ENCODE measurements at regions of chr19 and their contacts with region 1.

Region 1: GRCh38 chr19:55146078-55146704 is 2.8 kb downstream of the TNNT1 start:
- DNase-seq: peak; percentile 64
- ATAC-seq: peak; percentile 76
- H3K4me3 ChIP-seq: peak overlapping the region; percentile 60 to 69
- H3K27ac ChIP-seq: peak overlapping the region; percentile 99
- H3K4me1 ChIP-seq: peaks cover 14 to 60% of the 10 kb centered on the region in 2 experiments
- H3K27me3 ChIP-seq: no peaks in the 10 kb centered on the region
- CTCF ChIP-seq: peak; percentile 78 to 86 (median 80)
- POLR2A ChIP-seq: no peak
- RAD21 ChIP-seq: no peak; the same call in 1 of the 2 replicates

Region 2: GRCh38 chr19:55088543-55089341 is 57.4 kb before region 1 on chr19:
- CTCF ChIA-PET with region 1: no interaction called
- POLR2A ChIA-PET with region 1: no interaction called
- RAD21 ChIA-PET with region 1: no interaction called
- intact Hi-C with region 1: no loop called
- DNase-seq: no peak
- ATAC-seq: peak; percentile 74
- H3K4me3 ChIP-seq: no peak overlapping the region
- H3K27ac ChIP-seq: peak overlapping the region; percentile 28; the same call in 1 of the 2 replicates
- H3K4me1 ChIP-seq: peaks cover 0 to 3% of the 10 kb centered on the region in 2 experiments; a peak in 1 of 4 replicates
- H3K27me3 ChIP-seq: no peaks in the 10 kb centered on the region
- CTCF ChIP-seq: peak in 2 of 3 experiments; percentile 54 to 70; a peak in 4 of 6 replicates
- POLR2A ChIP-seq: no peak
- RAD21 ChIP-seq: no peak

Region 3: GRCh38 chr19:55117636-55118391 is 28.4 kb before region 1 on chr19 and contains the start of gene PPP1R12C:
- CTCF ChIA-PET with region 1: interaction called, 9 read pairs
- POLR2A ChIA-PET with region 1: interaction called, 10 read pairs
- RAD21 ChIA-PET with region 1: no interaction called
- intact Hi-C with region 1: no loop called
- DNase-seq: peak; percentile 96
- ATAC-seq: peak; percentile 92
- H3K4me3 ChIP-seq: peak within 1 kb of the TSS; percentile 84 to 99
- H3K27ac ChIP-seq: peak within 1 kb of the TSS; percentile 90
- H3K4me1 ChIP-seq: peaks cover 12 to 27% of the 10 kb centered on the region in 2 experiments
- H3K27me3 ChIP-seq: no peaks in the 10 kb centered on the region
- CTCF ChIP-seq: no peak
- POLR2A ChIP-seq: peak; percentile 44
- RAD21 ChIP-seq: no peak
- total RNA-seq, gene PPP1R12C: 83.2 TPM

Region 4: GRCh38 chr19:55160128-55160985 is 14.2 kb after region 1 on chr19:
- CTCF ChIA-PET with region 1: interaction called, 53 read pairs
- POLR2A ChIA-PET with region 1: interaction called, 24 read pairs
- RAD21 ChIA-PET with region 1: interaction called, 11 to 13 read pairs
- intact Hi-C with region 1: no loop called
- DNase-seq: peak; percentile 92
- ATAC-seq: peak; percentile 77
- H3K4me3 ChIP-seq: peak overlapping the region; percentile 67 to 74
- H3K27ac ChIP-seq: peak overlapping the region; percentile 78
- H3K4me1 ChIP-seq: peaks cover 13 to 53% of the 10 kb centered on the region in 2 experiments
- H3K27me3 ChIP-seq: no peaks in the 10 kb centered on the region
- CTCF ChIP-seq: peak; percentile 89 to 97 (median 96)
- POLR2A ChIP-seq: no peak
- RAD21 ChIP-seq: peak; percentile 94

Region 5: DNA sequence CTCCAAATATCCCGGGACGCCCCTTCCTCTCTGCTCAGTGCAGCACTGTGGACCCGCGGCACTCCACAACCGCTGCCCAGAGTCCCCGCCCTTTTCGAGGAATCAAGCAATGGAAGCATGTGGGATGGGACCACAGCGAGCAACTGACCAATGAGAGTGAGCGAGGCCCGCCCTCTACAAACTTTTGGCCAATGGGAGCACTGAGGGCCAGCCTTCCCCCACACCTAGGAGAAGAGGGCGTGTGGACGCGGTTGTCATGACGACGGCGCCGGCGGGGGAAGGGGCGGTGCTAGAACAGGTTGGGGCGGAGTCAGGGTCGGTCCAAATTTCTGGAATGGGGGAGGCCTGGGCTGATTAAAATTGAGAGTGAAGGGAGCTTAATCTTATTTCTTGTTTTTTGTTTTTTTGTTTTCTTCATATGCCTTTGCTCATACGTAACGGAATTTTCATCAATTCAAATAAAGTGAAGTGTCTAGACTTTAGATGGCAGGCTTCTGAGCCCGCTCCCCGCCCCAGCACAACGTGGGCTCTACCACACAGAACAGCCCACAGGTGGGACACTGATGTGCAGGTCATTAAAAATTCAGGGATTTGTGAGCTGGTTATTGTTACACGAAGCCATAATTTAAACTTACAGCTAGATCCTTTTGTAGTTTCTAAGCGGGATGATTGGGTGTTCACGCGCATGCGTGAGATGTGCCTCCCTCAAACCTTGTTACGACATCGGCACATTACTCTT is 20.5 kb after region 1 on chr19 and contains the start of gene DNAAF3:
- CTCF ChIA-PET with region 1: interaction called, 26 read pairs
- POLR2A ChIA-PET with region 1: interaction called, 4 read pairs
- RAD21 ChIA-PET with region 1: interaction called in 1 of 2 experiments, 7 read pairs
- intact Hi-C with region 1: no loop called
- DNase-seq: peak; percentile 97
- ATAC-seq: peak; percentile 94
- H3K4me3 ChIP-seq: peak within 1 kb of the TSS; percentile 72 to 74
- H3K27ac ChIP-seq: peak within 1 kb of the TSS; percentile 66
- H3K4me1 ChIP-seq: peaks cover 6 to 24% of the 10 kb centered on the region in 2 experiments; a peak in 3 of 4 replicates
- H3K27me3 ChIP-seq: no peaks in the 10 kb centered on the region
- CTCF ChIP-seq: no peak
- POLR2A ChIP-seq: peak; percentile 44
- RAD21 ChIP-seq: no peak
- total RNA-seq, gene DNAAF3: 52.8 TPM

Region 6: GRCh38 chr19:55418185-55418584 is 272.0 kb after region 1 on chr19:
- CTCF ChIA-PET with region 1: interaction called, 14 read pairs
- POLR2A ChIA-PET with region 1: no interaction called
- RAD21 ChIA-PET with region 1: interaction called, 3 read pairs
- intact Hi-C with region 1: loop called (anchors 1 kb)
- DNase-seq: peak; percentile 74
- ATAC-seq: peak; percentile 99
- H3K4me3 ChIP-seq: no peak overlapping the region
- H3K27ac ChIP-seq: no peak overlapping the region
- H3K4me1 ChIP-seq: peaks cover 2 to 6% of the 10 kb centered on the region in 2 experiments; a peak in 1 of 4 replicates
- H3K27me3 ChIP-seq: no peaks in the 10 kb centered on the region
- CTCF ChIP-seq: peak; percentile 69 to 87 (median 80)
- POLR2A ChIP-seq: no peak
- RAD21 ChIP-seq: peak; percentile 97

Measured in HCT116 (cell line).